RWPE1 (cell line): ENCODE measurements at regions of chr17 and their contacts with region 1.

Region 1: GRCh38 chr17:42577532-42578281 is at the start of gene PSMC3IP:
- DNase-seq: peak; percentile 98
- H3K27ac ChIP-seq: peak within 1 kb of the TSS; percentile 92
- CTCF ChIP-seq: no peak

Region 2: GRCh38 chr17:42609182-42609813 is 31.6 kb after region 1 on chr17 and contains the starts of genes RETREG3 and TUBG1:
- CTCF ChIA-PET with region 1: interaction called, 16 read pairs
- POLR2A ChIA-PET with region 1: interaction called, 8 read pairs
- DNase-seq: peak; percentile 99
- H3K27ac ChIP-seq: peak within 1 kb of the TSS; percentile 93
- CTCF ChIP-seq: no peak; the same call in 1 of the 2 replicates